Keratinocyte (primary cell): ENCODE measurements at regions of chr7 and their contacts with region 1.

Region 1: DNA sequence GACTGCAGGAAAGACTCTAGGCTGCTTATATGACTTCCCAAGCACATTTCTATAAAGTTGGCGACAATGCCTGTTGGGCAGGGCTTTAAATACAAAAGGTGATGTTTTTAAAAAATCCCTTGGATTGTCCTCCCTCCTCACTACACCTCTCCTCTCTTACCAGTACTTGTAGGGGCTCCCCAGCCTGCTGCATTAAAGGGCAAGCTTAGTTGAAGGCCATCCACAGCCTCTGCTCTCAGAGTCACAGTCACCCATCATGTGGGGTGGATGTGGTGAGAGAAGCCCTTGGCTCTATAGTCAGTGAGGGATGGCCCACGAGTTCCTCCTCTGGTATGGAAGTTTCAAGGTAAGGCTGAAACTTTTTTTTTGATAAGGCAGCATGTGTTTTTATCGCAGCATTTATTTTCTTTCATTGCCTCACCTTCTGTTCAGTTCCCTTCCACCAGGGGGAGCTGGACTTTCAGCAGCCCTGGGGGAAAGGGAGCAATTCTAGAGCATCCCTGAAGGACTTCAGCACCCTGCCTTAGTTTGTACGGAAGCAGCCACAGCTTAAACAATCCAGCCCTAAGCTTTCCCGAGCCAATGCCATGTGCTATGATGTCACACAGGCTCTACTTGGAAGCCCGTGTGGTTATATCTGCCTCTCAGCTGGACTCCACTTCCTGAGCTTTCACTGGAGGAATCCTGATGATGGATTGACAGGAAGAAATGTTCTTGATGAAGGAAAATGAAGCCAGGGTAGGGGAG is 131.9 kb downstream of the CALCR start:
- DNase-seq: no peak
- H3K4me3 ChIP-seq: no peak overlapping the region
- H3K27ac ChIP-seq: no peak overlapping the region
- H3K4me1 ChIP-seq: no peaks in the 10 kb centered on the region
- H3K27me3 ChIP-seq: no peaks in the 10 kb centered on the region
- CTCF ChIP-seq: peak; percentile 67 to 87 (median 80)

Region 2: GRCh38 chr7:93544691-93545090 is 102.0 kb after region 1 on chr7:
- dilution Hi-C with region 1: loop called (anchors 25 kb)
- DNase-seq: no peak
- H3K4me3 ChIP-seq: no peak overlapping the region
- H3K27ac ChIP-seq: no peak overlapping the region
- H3K4me1 ChIP-seq: no peaks in the 10 kb centered on the region
- H3K27me3 ChIP-seq: no peaks in the 10 kb centered on the region
- CTCF ChIP-seq: no peak